ENCODE measurements at regions of chr1 and their contacts with region 1.

Region 1: DNA sequence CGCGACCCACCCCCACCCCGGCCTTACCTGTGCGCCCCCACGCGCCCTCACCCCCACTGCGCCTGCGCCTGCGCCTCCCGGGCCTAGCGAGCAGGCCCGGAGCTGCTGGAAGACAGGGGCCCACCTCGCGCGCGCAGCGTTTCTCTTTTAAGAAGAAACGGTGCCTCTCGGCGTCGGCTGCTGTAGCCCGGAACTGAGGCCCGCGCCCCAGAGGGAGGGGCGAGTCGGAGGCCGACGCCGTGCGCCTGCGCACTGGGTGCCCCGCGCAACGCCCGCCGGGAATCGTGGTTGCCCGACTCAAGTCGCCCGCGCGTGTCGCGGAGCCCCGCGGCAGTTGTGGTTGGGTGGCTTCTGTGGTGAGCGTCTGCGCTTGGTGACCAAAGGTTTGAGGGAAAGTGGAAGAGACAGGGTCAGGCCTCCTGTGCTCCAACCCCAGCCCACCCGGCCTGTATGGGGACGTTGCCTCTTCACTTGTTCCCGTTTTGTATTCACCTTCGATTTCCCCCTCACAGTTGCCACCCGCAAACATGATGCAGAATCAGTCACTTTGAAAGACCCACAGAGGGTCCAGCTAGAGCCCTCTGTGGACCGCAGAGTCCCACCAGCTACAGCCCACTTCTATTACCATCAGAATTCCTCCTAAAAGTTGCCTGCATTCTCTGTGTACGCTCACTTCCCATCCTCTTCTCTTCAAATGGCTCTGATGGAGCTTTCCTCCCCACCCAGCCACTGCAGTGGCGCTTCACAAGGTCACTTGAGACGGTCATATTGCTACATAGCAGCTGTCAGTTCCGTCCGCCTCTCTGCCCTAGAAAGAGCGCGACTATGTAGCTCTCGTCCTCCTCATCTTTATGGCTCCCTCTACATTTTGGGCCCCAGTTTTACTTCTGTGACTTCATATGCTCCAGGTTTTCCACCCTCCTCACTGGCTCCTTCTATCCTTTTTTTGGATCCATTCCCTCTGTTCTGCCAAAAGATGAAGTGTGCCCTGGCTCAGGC is at the start of gene ZNF692:
- DNase-seq: peak; percentile 97 to 98
- ATAC-seq: peak; percentile 93 to 96 (median 95)
- H3K4me3 ChIP-seq: peak within 1 kb of the TSS; percentile 43 to 80 (median 64)
- H3K27ac ChIP-seq: peak within 1 kb of the TSS; percentile 59 to 97 (median 93)
- H3K4me1 ChIP-seq: peaks cover 13 to 47% (median 33%) of the 10 kb centered on the region in 9 donors
- H3K27me3 ChIP-seq: no peaks in the 10 kb centered on the region
- CTCF ChIP-seq: peak in 2 of 9 donors; percentile 8 to 25
- total RNA-seq, gene ZNF692: 7.1 to 26.5 (median 11.8) TPM

Region 2: GRCh38 chr1:248714248-248714647 is 144.9 kb before region 1 on chr1:
- intact Hi-C with region 1: no loop called
- DNase-seq: no peak
- ATAC-seq: no peak
- H3K4me3 ChIP-seq: no peak overlapping the region
- H3K27ac ChIP-seq: no peak overlapping the region
- H3K4me1 ChIP-seq: peaks cover 0 to 19% (median 0%) of the 10 kb centered on the region in 9 donors
- H3K27me3 ChIP-seq: peaks cover 0 to 4% (median 0%) of the 10 kb centered on the region in 7 donors
- CTCF ChIP-seq: no peak

Region 3: DNA sequence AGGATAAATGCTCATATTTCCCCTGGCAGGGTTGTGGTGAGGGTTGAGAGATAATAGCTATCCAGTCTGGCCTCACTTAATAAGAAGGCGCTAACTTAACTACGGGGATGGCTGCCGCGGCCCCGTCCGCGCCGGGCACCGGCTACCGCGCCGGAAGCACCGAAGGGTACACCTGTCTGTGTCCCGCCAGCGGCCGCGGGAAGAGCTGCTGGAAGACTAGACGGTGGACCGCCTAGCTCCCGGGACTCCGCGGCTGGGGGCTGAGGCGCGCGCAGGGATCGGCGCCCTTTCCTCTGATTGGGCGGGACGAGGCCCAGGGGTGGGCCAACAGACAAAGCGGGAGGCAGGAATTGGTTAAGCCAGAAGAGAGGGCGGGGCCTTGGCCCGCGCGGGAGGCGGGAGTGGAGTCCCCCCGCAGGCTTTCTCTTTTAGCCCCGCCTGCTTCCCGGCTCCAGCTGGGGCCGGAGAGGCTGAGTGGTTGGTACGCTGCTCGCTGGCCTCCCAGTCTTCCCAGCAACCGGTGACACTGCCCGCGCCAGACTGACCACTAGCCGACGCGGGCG is 21.3 kb before region 1 on chr1 and contains the start of gene ZNF672:
- intact Hi-C with region 1: loop called in 6 of 10 experiments (anchors 1 to 2 kb)
- DNase-seq: peak; percentile 98 to 99
- ATAC-seq: peak; percentile 92 to 97 (median 94)
- H3K4me3 ChIP-seq: peak within 1 kb of the TSS; percentile 74 to 97 (median 88)
- H3K27ac ChIP-seq: peak within 1 kb of the TSS; percentile 98 to 100 (median 100)
- H3K4me1 ChIP-seq: peaks cover 11 to 55% (median 42%) of the 10 kb centered on the region in 9 donors
- H3K27me3 ChIP-seq: no peaks in the 10 kb centered on the region
- CTCF ChIP-seq: no peak
- total RNA-seq, gene ZNF672: 31.9 to 44.4 (median 37.3) TPM